K562 (cell line): ENCODE measurements at regions of chr5 and their contacts with region 1.

Region 1: GRCh38 chr5:140710899-140711552 is 10.8 kb downstream of the ZMAT2 start:
- DNase-seq: peak; percentile 82 to 96 (median 85)
- ATAC-seq: peak; percentile 92
- H3K4me3 ChIP-seq: peak overlapping the region; percentile 68
- H3K27ac ChIP-seq: peak overlapping the region; percentile 99
- H3K4me1 ChIP-seq: peaks cover 0 to 10% of the 10 kb centered on the region in 2 experiments; a peak in 4 of 5 replicates
- H3K27me3 ChIP-seq: no peaks in the 10 kb centered on the region
- CTCF ChIP-seq: no peak
- EP300 ChIP-seq: peak; percentile 88
- POLR2A ChIP-seq: peak; percentile 75
- RAD21 ChIP-seq: no peak; a peak in 1 of 4 replicates

Region 2: GRCh38 chr5:140113699-140114263 is 597.2 kb before region 1 on chr5 and contains the start of gene PURA:
- CTCF ChIA-PET with region 1: no interaction called
- POLR2A ChIA-PET with region 1: no interaction called
- in situ Hi-C with region 1: no loop called
- intact Hi-C with region 1: loop called (anchors 10 kb)
- DNase-seq: peak; percentile 93 to 95 (median 94)
- ATAC-seq: peak; percentile 82
- H3K4me3 ChIP-seq: peak within 1 kb of the TSS; percentile 65
- H3K27ac ChIP-seq: peak within 1 kb of the TSS; percentile 78
- H3K4me1 ChIP-seq: peaks cover 28 to 30% of the 10 kb centered on the region in 2 experiments
- H3K27me3 ChIP-seq: no peaks in the 10 kb centered on the region
- CTCF ChIP-seq: peak in 2 of 3 experiments; percentile 2 to 23; a peak in 2 of 6 replicates
- EP300 ChIP-seq: no peak
- POLR2A ChIP-seq: no peak; the same call in 1 of the 2 replicates
- RAD21 ChIP-seq: no peak
- polyA plus RNA-seq, gene PURA: 3.2 to 4.2 TPM

Region 3: DNA sequence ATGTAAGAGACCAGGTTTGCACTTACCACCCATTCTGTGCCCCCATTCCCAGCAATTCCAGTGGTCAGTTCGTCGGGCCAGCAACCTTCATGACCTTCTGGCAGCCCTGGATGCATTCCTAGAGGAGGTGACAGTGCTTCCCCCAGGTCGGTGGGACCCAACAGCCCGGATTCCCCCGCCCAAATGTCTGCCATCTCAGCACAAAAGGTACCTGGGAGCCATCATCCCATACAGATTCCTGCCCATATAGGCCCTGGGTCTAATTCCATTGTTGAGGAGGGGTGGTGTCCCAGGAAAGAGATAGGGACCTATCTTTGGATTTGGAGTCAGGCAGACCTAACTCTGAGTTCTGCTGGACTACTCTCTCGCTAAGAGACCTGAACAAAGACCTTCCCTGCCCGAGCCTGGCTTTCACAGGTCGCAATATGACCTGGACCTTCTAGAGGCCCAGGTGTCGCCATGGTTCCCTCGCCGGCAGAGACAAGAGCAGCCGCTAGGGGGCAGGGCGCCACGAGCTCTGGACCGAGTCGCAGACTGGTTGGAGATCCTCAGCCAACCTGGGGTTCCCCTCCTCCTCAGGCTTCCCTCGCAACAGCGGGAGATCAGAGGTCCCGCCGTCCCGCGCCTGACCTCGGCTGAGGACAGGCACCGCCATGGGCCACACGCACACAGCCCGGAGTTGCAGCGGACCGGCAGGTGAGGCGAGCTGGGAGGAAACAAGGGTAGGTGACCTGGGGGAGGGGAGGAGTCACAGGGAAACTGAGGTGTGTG is 348.0 kb before region 1 on chr5:
- CTCF ChIA-PET with region 1: no interaction called
- POLR2A ChIA-PET with region 1: no interaction called
- in situ Hi-C with region 1: loop called (anchors 5 kb)
- intact Hi-C with region 1: no loop called
- DNase-seq: peak; percentile 85 to 92 (median 90)
- ATAC-seq: peak; percentile 95
- H3K4me3 ChIP-seq: peak overlapping the region; percentile 37
- H3K27ac ChIP-seq: no peak overlapping the region
- H3K4me1 ChIP-seq: peaks cover 9 to 14% of the 10 kb centered on the region in 2 experiments; a peak in 4 of 5 replicates
- H3K27me3 ChIP-seq: no peaks in the 10 kb centered on the region
- CTCF ChIP-seq: peak; percentile 94 to 98 (median 97)
- EP300 ChIP-seq: no peak
- POLR2A ChIP-seq: no peak
- RAD21 ChIP-seq: peak; percentile 52 to 82

Region 4: GRCh38 chr5:140547508-140548299 is 163.3 kb before region 1 on chr5 and contains the start of gene EIF4EBP3:
- CTCF ChIA-PET with region 1: no interaction called
- POLR2A ChIA-PET with region 1: interaction called, 26 read pairs
- in situ Hi-C with region 1: no loop called
- intact Hi-C with region 1: no loop called
- DNase-seq: peak; percentile 86 to 95 (median 90)
- ATAC-seq: peak; percentile 94
- H3K4me3 ChIP-seq: peak within 1 kb of the TSS; percentile 3; the same call in 1 of the 2 replicates
- H3K27ac ChIP-seq: peak within 1 kb of the TSS; percentile 61
- H3K4me1 ChIP-seq: peaks cover 34 to 35% of the 10 kb centered on the region in 2 experiments
- H3K27me3 ChIP-seq: no peaks in the 10 kb centered on the region; a peak in 1 of 5 replicates
- CTCF ChIP-seq: peak; percentile 51 to 72 (median 64)
- EP300 ChIP-seq: no peak
- POLR2A ChIP-seq: peak; percentile 44
- RAD21 ChIP-seq: peak; percentile 43 to 54
- polyA plus RNA-seq, gene EIF4EBP3: 5.0 to 7.5 TPM

Region 5: DNA sequence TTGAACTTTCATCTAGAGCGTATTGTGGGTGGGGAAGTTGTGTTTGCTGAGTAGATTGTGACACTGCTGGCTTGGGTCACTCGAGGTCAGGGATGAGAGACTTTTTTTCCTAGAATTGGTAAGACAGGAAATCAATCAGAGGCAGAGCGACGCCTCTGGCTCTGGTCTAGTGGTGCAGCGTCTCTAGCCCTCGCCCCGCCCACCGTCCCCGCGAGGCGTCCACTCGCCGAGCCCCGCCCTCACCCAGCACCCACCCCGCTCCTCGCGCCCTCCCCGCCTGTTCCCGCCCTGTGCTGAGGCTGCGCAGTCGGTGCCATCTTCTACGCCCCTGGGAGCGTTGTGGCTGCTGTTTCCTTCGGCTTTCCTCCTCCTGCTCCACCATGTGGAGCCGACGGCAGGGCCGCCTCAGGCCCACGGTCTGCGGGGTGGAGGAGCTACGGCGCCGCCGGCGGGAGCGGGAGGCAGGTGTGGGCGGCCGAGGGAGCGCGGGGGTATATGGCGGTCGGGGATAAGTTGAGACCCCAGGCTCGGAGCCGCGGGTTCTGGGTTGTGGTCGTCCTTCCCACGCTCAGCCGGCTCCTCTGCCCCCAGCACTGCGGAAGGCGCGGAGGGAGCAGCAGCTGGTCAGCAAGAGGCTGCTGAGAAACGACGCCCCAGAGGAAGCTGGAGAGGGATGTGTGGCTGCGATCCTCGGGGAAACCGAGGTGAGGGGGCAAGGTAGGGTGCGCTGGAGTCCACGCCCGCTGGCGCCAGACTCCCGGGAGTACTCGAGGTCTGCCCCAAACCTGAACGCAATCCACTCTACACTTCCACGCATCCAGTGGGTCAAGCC is 71.7 kb before region 1 on chr5 and contains the start of gene TMCO6:
- CTCF ChIA-PET with region 1: no interaction called
- POLR2A ChIA-PET with region 1: interaction called, 5 read pairs
- in situ Hi-C with region 1: no loop called
- intact Hi-C with region 1: loop called (anchors 2 kb)
- DNase-seq: peak; percentile 98 to 99 (median 99)
- ATAC-seq: peak; percentile 95
- H3K4me3 ChIP-seq: peak within 1 kb of the TSS; percentile 54
- H3K27ac ChIP-seq: peak within 1 kb of the TSS; percentile 87
- H3K4me1 ChIP-seq: peaks cover 4 to 20% of the 10 kb centered on the region in 2 experiments; a peak in 4 of 5 replicates
- H3K27me3 ChIP-seq: no peaks in the 10 kb centered on the region; a peak in 1 of 5 replicates
- CTCF ChIP-seq: peak; percentile 64 to 78 (median 77)
- EP300 ChIP-seq: peak; percentile 81
- POLR2A ChIP-seq: peak; percentile 83
- RAD21 ChIP-seq: peak; percentile 50
- polyA plus RNA-seq, gene TMCO6: 3.4 to 5.1 TPM

Region 6: DNA sequence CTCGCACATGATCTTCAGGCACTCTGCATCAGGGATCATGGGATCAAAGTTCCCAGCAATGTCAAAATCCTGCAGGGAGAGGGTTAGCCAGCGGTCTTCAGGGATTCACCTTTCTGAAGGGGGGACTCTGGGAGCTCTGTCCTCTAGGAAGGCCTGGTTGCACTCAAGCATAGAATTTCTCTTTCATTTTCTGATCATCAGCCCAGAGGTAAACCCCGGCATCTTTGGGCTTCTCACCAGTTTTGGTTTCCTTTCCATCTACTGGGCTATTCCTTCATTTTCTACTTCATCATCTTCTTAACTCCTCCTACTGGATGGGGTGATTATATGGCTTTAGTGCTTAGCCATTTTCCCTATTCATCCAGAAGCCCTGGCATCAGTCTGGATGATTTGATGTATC is 33.1 kb before region 1 on chr5:
- CTCF ChIA-PET with region 1: no interaction called
- POLR2A ChIA-PET with region 1: interaction called, 4 read pairs
- in situ Hi-C with region 1: no loop called
- intact Hi-C with region 1: loop called (anchors 2 kb)
- DNase-seq: no peak
- ATAC-seq: no peak
- H3K4me3 ChIP-seq: no peak overlapping the region
- H3K27ac ChIP-seq: no peak overlapping the region; the same call in 2 of the 3 replicates
- H3K4me1 ChIP-seq: peaks cover 13 to 14% of the 10 kb centered on the region in 2 experiments; a peak in 4 of 5 replicates
- H3K27me3 ChIP-seq: no peaks in the 10 kb centered on the region
- CTCF ChIP-seq: no peak
- EP300 ChIP-seq: no peak
- POLR2A ChIP-seq: no peak
- RAD21 ChIP-seq: no peak

Region 7: DNA sequence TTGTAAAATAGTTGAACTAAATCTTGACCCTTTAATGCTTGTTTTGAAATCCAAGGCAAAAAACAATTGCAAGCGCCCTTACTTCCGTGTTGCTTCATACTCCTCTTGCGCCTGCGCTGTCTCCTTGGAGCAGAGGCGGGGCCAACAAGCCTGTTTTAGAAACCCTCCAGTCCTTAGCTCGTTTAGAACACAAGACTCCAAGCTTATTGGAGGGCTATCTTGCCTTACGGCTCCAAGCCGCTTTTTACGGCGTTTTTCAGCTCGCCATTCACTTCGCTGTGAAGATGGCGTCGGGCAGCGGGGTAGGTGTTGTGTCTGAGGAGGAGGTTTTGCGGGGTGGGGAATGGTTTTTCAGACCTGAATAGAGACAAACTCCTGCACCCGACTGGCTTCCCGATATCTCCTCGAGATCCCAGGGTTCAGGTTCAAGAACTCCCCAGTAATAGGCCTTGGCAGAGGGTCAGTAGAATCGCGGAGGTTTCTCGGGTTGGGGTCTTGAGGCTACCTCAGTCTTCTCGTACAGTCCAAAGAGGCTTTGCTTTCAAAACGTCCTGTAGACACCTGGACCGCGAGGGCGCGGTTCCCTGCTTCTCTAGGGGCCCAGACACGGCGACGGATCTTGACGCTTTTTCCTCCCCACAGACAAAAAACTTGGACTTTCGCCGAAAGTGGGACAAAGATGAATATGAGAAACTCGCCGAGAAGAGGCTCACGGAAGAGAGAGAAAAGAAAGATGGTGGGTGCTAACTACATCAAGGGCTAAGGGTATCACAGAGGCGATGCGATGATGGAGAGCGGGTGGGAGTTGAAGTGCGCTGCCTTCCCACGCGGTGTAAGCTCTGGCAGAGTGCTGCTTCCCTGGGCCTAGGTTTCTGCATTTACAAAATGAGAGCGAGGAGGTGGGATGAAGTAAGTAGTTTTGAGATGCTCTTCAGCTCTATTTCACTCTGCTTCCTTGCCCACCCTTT is 10.6 kb before region 1 on chr5 and contains the start of gene ZMAT2:
- CTCF ChIA-PET with region 1: no interaction called
- POLR2A ChIA-PET with region 1: interaction called, 34 read pairs
- in situ Hi-C with region 1: no loop called
- intact Hi-C with region 1: no loop called
- DNase-seq: peak; percentile 94 to 97 (median 94)
- ATAC-seq: peak; percentile 99
- H3K4me3 ChIP-seq: peak within 1 kb of the TSS; percentile 87
- H3K27ac ChIP-seq: peak within 1 kb of the TSS; percentile 78
- H3K4me1 ChIP-seq: peaks cover 0 to 8% of the 10 kb centered on the region in 2 experiments; a peak in 2 of 5 replicates
- H3K27me3 ChIP-seq: no peaks in the 10 kb centered on the region
- CTCF ChIP-seq: no peak
- EP300 ChIP-seq: no peak
- POLR2A ChIP-seq: peak; percentile 93
- RAD21 ChIP-seq: no peak
- polyA plus RNA-seq, gene ZMAT2: 44.2 to 45.0 TPM